ENCODE measurements at regions of chr2 and their contacts with region 1.

Region 1: GRCh38 chr2:86079981-86080911 is 25.4 kb downstream of the POLR1A start:
- DNase-seq: peak; percentile 73 to 91 (median 80)
- ATAC-seq: peak; percentile 71 to 92 (median 80)
- H3K4me3 ChIP-seq: no peak overlapping the region
- H3K27ac ChIP-seq: peak overlapping the region in 1 of 12 donors; percentile 53
- H3K4me1 ChIP-seq: peaks cover 0 to 28% (median 9%) of the 10 kb centered on the region in 12 donors
- H3K27me3 ChIP-seq: no peaks in the 10 kb centered on the region
- CTCF ChIP-seq: peak; percentile 71 to 88 (median 80)
- POLR2A ChIP-seq: no peak

Region 2: GRCh38 chr2:85635636-85636035 is 444.6 kb before region 1 on chr2:
- intact Hi-C with region 1: loop called in 1 of 10 experiments (anchors 10 kb)
- DNase-seq: no peak
- ATAC-seq: peak in 2 of 4 donors; percentile 59 to 69
- H3K4me3 ChIP-seq: no peak overlapping the region
- H3K27ac ChIP-seq: peak overlapping the region in 1 of 12 donors; percentile 3
- H3K4me1 ChIP-seq: peaks cover 0 to 8% (median 0%) of the 10 kb centered on the region in 12 donors
- H3K27me3 ChIP-seq: no peaks in the 10 kb centered on the region
- CTCF ChIP-seq: no peak
- POLR2A ChIP-seq: no peak

Region 3: DNA sequence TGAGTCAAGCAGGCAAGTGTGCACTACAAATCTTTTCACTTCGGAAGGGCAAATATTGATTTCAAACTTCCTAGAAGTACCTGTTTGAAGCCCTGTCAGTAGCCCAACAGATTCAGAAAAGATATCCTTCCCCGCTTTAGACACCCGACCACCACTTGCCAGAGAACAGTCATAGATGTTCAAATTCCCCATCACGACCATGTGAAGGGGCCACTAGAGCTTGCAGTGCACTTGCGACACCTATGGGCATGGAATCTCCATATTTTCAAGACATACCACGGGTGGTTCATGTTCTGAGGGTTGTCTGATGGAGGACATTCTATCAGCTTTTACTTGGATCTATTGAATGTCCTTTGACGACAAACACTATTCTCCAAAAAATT is 362.2 kb before region 1 on chr2:
- intact Hi-C with region 1: loop called in 5 of 10 experiments (anchors 5 to 10 kb)
- DNase-seq: peak in 1 of 5 donors; percentile 3
- ATAC-seq: no peak
- H3K4me3 ChIP-seq: no peak overlapping the region
- H3K27ac ChIP-seq: no peak overlapping the region
- H3K4me1 ChIP-seq: peaks cover 0 to 41% (median 18%) of the 10 kb centered on the region in 12 donors
- H3K27me3 ChIP-seq: no peaks in the 10 kb centered on the region
- CTCF ChIP-seq: no peak
- POLR2A ChIP-seq: no peak

Region 4: GRCh38 chr2:85737481-85737880 is 342.8 kb before region 1 on chr2:
- intact Hi-C with region 1: loop called in 1 of 10 experiments (anchors 10 kb)
- DNase-seq: peak in 4 of 5 donors; percentile 72 to 78 (median 73)
- ATAC-seq: peak; percentile 44 to 69 (median 60)
- H3K4me3 ChIP-seq: no peak overlapping the region
- H3K27ac ChIP-seq: peak overlapping the region in 9 of 12 donors; percentile 31 to 69 (median 56)
- H3K4me1 ChIP-seq: peaks cover 0 to 66% (median 33%) of the 10 kb centered on the region in 12 donors
- H3K27me3 ChIP-seq: no peaks in the 10 kb centered on the region
- CTCF ChIP-seq: no peak
- POLR2A ChIP-seq: no peak

Region 5: GRCh38 chr2:85888684-85889626 is 191.3 kb before region 1 on chr2 and contains the start of gene ST3GAL5:
- intact Hi-C with region 1: loop called in 8 of 10 experiments (anchors 1 to 5 kb)
- DNase-seq: peak; percentile 91 to 97 (median 93)
- ATAC-seq: peak; percentile 82 to 91 (median 84)
- H3K4me3 ChIP-seq: peak within 1 kb of the TSS; percentile 51 to 89 (median 72)
- H3K27ac ChIP-seq: peak within 1 kb of the TSS; percentile 52 to 94 (median 80)
- H3K4me1 ChIP-seq: peaks cover 0 to 73% (median 24%) of the 10 kb centered on the region in 12 donors
- H3K27me3 ChIP-seq: no peaks in the 10 kb centered on the region
- CTCF ChIP-seq: peak; percentile 38 to 82 (median 68)
- POLR2A ChIP-seq: peak in 1 of 2 donors; percentile 8
- total RNA-seq, gene ST3GAL5: 2.0 to 21.1 (median 4.0) TPM

Region 6: GRCh38 chr2:86038291-86039081 is 41.8 kb before region 1 on chr2:
- intact Hi-C with region 1: no loop called
- DNase-seq: peak in 2 of 5 donors; percentile 37 to 43
- ATAC-seq: peak in 2 of 4 donors; percentile 12 to 24
- H3K4me3 ChIP-seq: no peak overlapping the region
- H3K27ac ChIP-seq: peak overlapping the region; percentile 72 to 97 (median 85)
- H3K4me1 ChIP-seq: peaks cover 19 to 57% (median 45%) of the 10 kb centered on the region in 12 donors
- H3K27me3 ChIP-seq: no peaks in the 10 kb centered on the region
- CTCF ChIP-seq: no peak
- POLR2A ChIP-seq: peak in 1 of 2 donors; percentile 17